Heart right ventricle (tissue), 16 donors: ENCODE measurements at regions of chr16 and their contacts with region 1.

Region 1: GRCh38 chr16:10641953-10642949 is 52.5 kb downstream of the TEKT5 start:
- DNase-seq: no peak
- ATAC-seq: no peak
- H3K4me3 ChIP-seq: no peak overlapping the region
- H3K27ac ChIP-seq: no peak overlapping the region
- H3K4me1 ChIP-seq: no peaks in the 10 kb centered on the region
- H3K27me3 ChIP-seq: no peaks in the 10 kb centered on the region
- CTCF ChIP-seq: no peak

Region 2: GRCh38 chr16:9469512-9469911 is 1172.7 kb before region 1 on chr16:
- intact Hi-C with region 1: loop called in 1 of 10 experiments (anchors 5 kb)
- DNase-seq: no peak
- ATAC-seq: peak in 1 of 8 donors; percentile 39
- H3K4me3 ChIP-seq: no peak overlapping the region
- H3K27ac ChIP-seq: no peak overlapping the region
- H3K4me1 ChIP-seq: no peaks in the 10 kb centered on the region
- H3K27me3 ChIP-seq: no peaks in the 10 kb centered on the region
- CTCF ChIP-seq: no peak

Region 3: DNA sequence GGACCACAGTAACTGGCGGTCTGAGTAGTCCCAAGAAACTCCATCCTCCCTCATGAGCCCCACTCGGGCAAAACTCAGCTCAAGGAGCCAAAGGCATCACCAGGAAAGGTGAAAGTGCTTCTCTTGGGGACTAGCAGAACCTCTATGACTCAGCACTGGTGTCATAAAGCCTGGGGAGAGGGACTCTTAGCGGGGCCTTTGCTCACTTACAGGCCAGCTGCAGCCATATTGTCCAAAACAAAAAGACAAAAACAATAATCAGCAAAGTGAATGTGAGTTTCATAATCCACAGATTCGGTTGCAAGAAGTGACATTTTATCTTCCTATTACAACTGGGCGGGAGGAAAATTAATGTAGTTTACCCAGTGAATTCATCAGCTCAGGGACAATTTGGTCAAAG is 52.6 kb after region 1 on chr16 and contains the start of gene TEKT5:
- intact Hi-C with region 1: loop called in 1 of 10 experiments (anchors 10 kb)
- DNase-seq: no peak
- ATAC-seq: no peak
- H3K4me3 ChIP-seq: no peak within 1 kb of the TSS
- H3K27ac ChIP-seq: no peak within 1 kb of the TSS
- H3K4me1 ChIP-seq: no peaks in the 10 kb centered on the region
- H3K27me3 ChIP-seq: no peaks in the 10 kb centered on the region
- CTCF ChIP-seq: no peak
- total RNA-seq, gene TEKT5: 0.59 to 0.69 TPM in 2 of 10 donors, not detected in the others

Region 4: DNA sequence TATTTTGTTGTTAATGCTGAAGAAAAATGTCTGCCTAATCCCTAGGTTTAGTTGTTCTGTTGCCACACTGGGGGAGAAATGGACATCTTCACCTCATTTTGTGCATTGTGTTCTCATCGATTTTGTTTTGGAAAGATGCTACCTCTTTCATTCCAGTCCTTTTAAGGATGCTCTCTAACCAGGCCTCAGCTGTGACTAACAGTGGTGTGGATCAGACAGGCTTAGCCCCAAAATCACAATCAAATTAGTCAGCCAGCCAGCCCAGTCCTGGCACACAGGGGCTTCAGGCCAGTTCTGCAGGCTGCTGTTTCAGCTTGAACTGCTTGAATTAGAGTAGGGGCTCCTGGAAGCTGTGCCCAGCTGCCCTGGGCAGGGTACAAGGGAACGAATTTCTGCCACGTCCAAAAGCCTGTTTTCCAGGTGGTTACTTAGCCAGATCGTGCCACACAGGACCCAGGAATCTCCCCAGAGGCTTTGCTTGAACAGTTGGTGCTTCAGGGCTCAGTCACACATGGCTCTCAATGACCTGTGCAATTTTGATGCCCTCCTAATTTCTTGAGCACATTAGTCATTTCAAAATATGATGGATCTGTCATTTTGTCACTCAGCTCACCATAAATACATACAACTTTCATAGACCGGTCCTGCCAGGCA is 362.8 kb after region 1 on chr16:
- intact Hi-C with region 1: no loop called
- DNase-seq: no peak
- ATAC-seq: no peak
- H3K4me3 ChIP-seq: no peak overlapping the region
- H3K27ac ChIP-seq: no peak overlapping the region
- H3K4me1 ChIP-seq: peaks cover 0 to 5% (median 0%) of the 10 kb centered on the region in 9 donors
- H3K27me3 ChIP-seq: no peaks in the 10 kb centered on the region
- CTCF ChIP-seq: no peak